Kidney (tissue), 22 donors: ENCODE measurements at regions of chr17 and their contacts with region 1.

Region 1: DNA sequence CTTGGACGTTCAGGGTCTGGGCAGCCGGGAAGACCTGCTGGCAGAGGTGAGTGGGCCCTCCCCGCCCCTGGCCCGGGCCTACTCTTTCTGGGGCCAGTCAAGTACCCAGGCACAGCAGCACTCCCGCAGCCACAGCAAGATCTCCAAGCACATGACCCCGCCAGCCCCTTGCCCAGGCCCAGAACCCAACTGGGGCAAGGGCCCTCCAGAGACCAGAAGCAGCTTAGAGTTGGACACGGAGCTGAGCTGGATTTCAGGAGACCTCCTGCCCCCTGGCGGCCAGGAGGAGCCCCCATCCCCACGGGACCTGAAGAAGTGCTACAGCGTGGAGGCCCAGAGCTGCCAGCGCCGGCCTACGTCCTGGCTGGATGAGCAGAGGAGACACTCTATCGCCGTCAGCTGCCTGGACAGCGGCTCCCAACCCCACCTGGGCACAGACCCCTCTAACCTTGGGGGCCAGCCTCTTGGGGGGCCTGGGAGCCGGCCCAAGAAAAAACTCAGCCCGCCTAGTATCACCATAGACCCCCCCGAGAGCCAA is 8.6 kb upstream of the ABCC3 start:
- DNase-seq: peak; percentile 80 to 88 (median 86)
- H3K4me3 ChIP-seq: no peak overlapping the region
- H3K27ac ChIP-seq: no peak overlapping the region
- H3K4me1 ChIP-seq: peaks cover 0 to 11% (median 3%) of the 10 kb centered on the region in 3 donors
- H3K27me3 ChIP-seq: no peaks in the 10 kb centered on the region
- CTCF ChIP-seq: peak; percentile 75

Region 2: DNA sequence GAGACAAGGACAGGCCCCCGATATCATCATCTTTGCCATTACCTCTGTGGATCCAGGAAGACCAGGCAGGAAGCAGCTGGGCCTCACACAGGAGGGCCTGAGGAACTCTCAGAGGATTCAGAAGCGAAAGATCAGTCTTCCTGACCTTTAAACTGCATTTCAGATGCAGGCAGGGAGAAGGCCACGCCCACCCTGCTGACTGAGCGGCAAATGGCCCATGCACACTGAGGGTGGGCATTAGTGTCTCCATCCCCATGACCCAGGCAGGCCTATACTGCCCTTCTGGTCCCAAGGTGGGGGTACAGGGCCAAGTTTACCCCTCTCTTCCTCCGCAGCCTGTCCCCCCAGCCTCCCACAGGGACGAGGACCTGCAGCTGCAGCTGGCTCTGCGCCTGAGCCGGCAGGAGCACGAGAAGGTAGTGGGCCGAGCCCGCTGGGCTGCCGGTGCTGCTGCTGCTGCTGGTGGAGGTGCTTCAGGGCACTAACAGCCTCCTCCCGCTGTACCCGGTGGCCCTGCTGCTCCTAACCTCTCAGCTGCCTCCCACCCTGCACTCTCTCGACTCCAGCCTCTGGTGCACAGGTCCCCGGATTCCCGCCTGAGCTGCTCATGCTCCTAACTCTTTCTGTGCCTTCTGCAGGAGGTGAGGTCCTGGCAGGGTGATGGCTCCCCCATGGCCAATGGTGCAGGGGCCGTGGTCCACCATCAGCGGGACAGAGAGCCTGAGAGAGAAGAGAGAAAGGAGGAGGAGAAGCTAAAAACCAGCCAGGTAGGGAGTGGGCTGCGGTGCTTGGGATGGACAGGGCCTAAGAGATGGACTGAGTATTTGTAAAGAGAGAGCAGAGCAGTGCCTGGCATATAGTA is 87.3 kb before region 1 on chr17:
- intact Hi-C with region 1: no loop called
- DNase-seq: peak in 1 of 5 donors; percentile 64
- H3K4me3 ChIP-seq: no peak overlapping the region
- H3K27ac ChIP-seq: peak overlapping the region in 1 of 2 donors; percentile 78
- H3K4me1 ChIP-seq: peaks cover 0 to 45% (median 5%) of the 10 kb centered on the region in 3 donors
- H3K27me3 ChIP-seq: no peaks in the 10 kb centered on the region
- CTCF ChIP-seq: no peak

Region 3: DNA sequence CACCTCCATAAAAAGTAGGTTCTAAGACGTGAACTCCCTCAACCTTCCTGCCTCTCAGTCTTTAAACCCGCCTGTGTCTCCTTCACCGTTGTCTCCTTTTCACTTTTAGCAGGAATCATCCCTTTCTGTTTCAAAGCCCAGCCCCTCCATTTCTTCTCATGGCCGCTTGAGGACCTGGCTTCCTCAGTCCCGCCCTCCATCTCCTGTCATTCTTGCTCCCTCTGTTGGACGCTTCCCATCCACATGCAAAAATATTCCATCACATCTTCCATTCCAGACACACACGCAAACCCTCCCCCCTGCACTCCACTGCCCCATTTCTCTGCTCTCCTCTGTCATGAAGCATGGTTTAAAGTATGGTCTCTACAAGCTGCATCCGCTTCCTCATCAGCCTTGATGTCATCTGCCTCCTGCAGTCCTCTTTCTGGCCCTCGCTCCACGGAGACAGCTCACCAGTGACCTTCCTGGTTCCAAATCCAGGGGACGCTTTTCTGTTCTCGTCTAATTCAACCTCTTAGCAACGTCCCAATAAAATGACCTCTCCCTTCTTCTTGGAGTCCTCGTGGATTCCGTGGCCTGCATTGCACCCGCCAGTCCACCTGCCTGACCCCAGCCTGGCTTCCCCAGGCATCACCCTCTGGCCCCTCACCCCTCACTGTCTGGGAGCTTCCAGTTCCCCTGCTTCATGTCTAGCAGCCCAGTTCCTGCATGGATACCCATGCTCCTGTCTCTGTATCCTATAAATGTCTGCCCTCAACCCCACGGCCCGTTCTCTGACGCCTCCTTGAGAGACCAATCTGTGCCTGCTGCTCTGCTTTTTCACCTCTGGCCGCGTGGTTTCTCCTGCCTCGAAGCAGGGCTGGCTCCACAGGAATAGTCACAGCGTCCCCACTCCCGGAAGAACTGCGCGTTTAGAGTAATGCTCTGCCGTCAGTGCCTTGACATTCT is 55.4 kb after region 1 on chr17:
- intact Hi-C with region 1: loop called (anchors 10 kb)
- DNase-seq: peak; percentile 63 to 91 (median 66)
- H3K4me3 ChIP-seq: peak overlapping the region in 2 of 3 donors; percentile 17 to 38
- H3K27ac ChIP-seq: no peak overlapping the region
- H3K4me1 ChIP-seq: peaks cover 0 to 9% (median 6%) of the 10 kb centered on the region in 3 donors
- H3K27me3 ChIP-seq: no peaks in the 10 kb centered on the region
- CTCF ChIP-seq: peak; percentile 68